Kidney (tissue), 22 donors: ENCODE measurements at regions of chr1 and their contacts with region 1.

Region 1: GRCh38 chr1:202112839-202113672 is 9.7 kb upstream of the GPR37L1 start:
- DNase-seq: peak in 2 of 5 donors; percentile 53 to 88
- H3K4me3 ChIP-seq: no peak overlapping the region
- H3K27ac ChIP-seq: peak overlapping the region; percentile 38 to 67
- H3K4me1 ChIP-seq: peaks cover 0 to 23% (median 20%) of the 10 kb centered on the region in 3 donors
- H3K27me3 ChIP-seq: no peaks in the 10 kb centered on the region
- CTCF ChIP-seq: no peak

Region 2: GRCh38 chr1:201982623-201983379 is 130.3 kb before region 1 on chr1 and contains the start of gene RNPEP:
- intact Hi-C with region 1: no loop called
- DNase-seq: peak; percentile 76 to 91 (median 84)
- H3K4me3 ChIP-seq: peak within 1 kb of the TSS; percentile 82 to 95 (median 90)
- H3K27ac ChIP-seq: peak within 1 kb of the TSS; percentile 78 to 82
- H3K4me1 ChIP-seq: peaks cover 0 to 14% (median 2%) of the 10 kb centered on the region in 3 donors
- H3K27me3 ChIP-seq: no peaks in the 10 kb centered on the region
- CTCF ChIP-seq: no peak
- total RNA-seq, gene RNPEP: 54.6 TPM

Region 3: DNA sequence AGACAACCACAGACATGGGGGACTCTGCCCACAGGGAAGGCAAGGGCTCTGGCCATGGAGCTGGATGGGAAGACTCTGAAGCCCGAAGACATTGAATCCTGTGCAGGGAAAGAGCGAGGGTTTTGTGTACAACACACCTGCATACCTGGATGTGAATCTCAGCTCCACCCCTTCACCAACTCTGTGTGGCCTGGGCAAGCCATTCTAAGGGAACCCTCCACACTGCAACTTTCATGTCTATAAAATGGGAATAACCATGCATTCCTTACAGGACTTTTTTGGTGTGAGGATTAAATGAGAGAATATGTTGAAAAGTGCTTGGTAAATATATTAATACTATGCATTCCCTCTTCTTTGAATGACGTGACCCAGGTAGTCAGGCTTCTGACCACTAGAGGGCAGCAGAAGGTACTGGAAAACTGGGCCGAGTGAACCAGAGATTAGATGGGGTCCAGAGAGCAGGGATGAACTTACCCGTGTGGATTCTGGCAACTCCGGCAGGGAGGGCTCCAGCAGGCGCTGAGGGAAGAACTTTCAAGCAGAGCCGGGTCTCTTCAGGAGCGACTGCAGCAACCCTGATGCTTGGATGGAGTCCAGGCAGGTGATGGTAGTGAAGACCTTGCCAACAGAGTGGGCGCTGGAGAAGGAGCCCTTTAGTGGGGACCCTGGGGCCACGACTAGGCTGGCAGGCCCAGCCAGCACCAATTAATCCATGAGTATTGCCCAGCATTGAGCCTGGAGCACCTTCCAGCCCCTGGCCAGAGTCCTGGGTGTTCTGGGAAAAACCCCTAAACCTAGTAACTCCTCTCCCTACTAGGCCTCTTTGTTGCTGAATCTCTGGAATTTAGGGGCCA is 103.5 kb before region 1 on chr1:
- intact Hi-C with region 1: loop called (anchors 5 kb)
- DNase-seq: peak; percentile 87 to 95 (median 90)
- H3K4me3 ChIP-seq: peak overlapping the region in 1 of 3 donors; percentile 16
- H3K27ac ChIP-seq: peak overlapping the region; percentile 86 to 88
- H3K4me1 ChIP-seq: peaks cover 5 to 11% (median 6%) of the 10 kb centered on the region in 3 donors
- H3K27me3 ChIP-seq: no peaks in the 10 kb centered on the region
- CTCF ChIP-seq: peak; percentile 90